ENCODE measurements at regions of chr15 and their contacts with region 1.

Region 1: GRCh38 chr15:61051569-61052031 is 177.5 kb downstream of the RORA start:
- DNase-seq: peak in 1 of 2 donors; percentile 56
- ATAC-seq: peak; percentile 87
- H3K4me3 ChIP-seq: no peak overlapping the region
- H3K27ac ChIP-seq: no peak overlapping the region
- H3K4me1 ChIP-seq: no peaks in the 10 kb centered on the region
- H3K27me3 ChIP-seq: no peaks in the 10 kb centered on the region

Region 2: DNA sequence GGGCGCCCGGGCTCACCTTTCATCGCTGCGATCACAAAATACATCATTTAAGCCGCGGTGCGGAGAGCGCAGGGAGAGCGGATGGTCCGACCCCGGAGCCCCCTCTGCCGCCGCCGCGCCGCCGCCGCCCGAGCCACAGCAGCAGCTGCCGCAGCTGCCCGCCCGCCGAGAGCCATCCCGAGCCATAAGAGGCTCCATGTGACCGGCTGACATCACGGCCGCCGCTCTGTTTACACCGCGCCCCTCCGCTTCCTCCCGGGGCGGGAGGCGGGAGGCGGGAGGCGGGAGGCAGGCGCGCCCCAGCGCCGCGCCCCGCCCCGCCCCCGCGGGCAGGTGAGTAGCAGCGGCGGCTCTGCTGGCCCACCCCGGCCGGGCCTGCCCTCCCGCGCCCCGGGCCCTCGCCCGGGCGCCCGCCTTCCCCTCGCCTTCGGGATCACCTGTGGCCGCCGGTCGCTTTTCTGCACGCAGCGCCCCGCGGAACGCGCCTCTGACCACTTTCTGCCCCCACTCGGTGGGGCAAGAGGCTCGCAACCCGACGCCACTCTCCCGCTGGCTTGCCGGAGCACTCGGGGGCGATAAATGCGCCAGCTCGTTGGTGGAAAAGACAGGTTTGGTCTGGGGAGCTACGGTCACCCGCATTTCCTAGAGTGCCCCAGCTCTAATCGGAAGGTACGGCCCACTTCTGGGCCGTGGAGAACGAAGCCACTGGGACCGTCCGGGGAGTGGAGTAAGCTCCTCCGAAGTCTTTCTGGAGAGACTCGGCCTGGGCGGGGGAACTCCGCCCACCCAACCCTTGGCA is 459.0 kb before region 1 on chr15:
- intact Hi-C with region 1: loop called in 1 of 2 experiments (anchors 5 kb)
- DNase-seq: peak; percentile 91 to 93
- ATAC-seq: peak; percentile 88
- H3K4me3 ChIP-seq: peak overlapping the region; percentile 83 to 94
- H3K27ac ChIP-seq: peak overlapping the region in 1 of 2 donors; percentile 34
- H3K4me1 ChIP-seq: peaks cover 0 to 3% of the 10 kb centered on the region in 2 donors
- H3K27me3 ChIP-seq: no peaks in the 10 kb centered on the region

Region 3: DNA sequence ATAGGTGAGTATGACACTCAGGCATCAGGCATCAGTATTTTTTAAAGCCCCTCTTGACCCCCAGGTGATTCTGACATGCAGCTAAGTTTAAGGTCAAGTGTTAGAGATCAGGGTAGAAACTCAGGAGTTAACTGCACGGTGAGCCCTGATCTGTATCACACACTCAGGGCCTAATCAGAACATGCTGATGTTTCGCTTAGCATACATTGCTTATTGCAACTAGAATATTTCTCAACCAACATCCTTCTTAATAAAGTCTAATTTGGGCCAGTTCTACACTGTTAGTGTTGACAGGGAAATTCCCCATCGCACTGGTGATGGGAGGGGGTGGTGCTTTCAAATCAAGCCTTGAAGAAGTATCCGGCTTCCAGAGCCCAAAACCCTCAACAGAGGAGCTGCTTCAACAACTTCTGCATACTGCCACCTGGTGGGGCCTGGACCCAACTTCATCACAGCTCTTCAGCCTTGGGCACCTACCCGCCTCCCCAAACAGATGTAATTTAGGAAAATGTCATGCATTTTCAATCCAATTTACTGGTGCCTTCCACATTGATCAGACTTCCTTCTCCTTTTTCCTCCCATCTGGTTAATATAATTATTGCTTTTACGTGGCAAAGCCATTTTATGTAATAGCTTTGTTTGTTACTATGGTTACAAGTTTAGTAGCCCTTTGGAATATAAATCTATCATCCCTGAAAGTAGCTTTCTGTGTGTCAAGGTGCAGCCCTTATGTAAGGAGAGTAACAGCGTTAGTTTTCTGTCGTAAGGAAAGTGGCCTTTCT is 134.7 kb before region 1 on chr15:
- intact Hi-C with region 1: loop called in 1 of 2 experiments (anchors 10 kb)
- DNase-seq: peak; percentile 93
- ATAC-seq: peak; percentile 92
- H3K4me3 ChIP-seq: peak overlapping the region in 1 of 2 donors; percentile 28
- H3K27ac ChIP-seq: peak overlapping the region; percentile 70 to 79
- H3K4me1 ChIP-seq: no peaks in the 10 kb centered on the region
- H3K27me3 ChIP-seq: no peaks in the 10 kb centered on the region

Region 4: GRCh38 chr15:61318301-61318700 is 266.7 kb after region 1 on chr15:
- intact Hi-C with region 1: no loop called
- DNase-seq: no peak
- ATAC-seq: no peak
- H3K4me3 ChIP-seq: no peak overlapping the region
- H3K27ac ChIP-seq: no peak overlapping the region
- H3K4me1 ChIP-seq: no peaks in the 10 kb centered on the region
- H3K27me3 ChIP-seq: no peaks in the 10 kb centered on the region